Ovary (tissue), 10 donors: ENCODE measurements at regions of chr2 and their contacts with region 1.

Region 1: GRCh38 chr2:88489200-88489599 is 36.7 kb upstream of the FOXI3 start:
- DNase-seq: no peak
- H3K4me3 ChIP-seq: no peak overlapping the region
- H3K27ac ChIP-seq: no peak overlapping the region
- H3K4me1 ChIP-seq: no peaks in the 10 kb centered on the region
- H3K27me3 ChIP-seq: no peaks in the 10 kb centered on the region
- CTCF ChIP-seq: no peak
- EP300 ChIP-seq: no peak
- POLR2A ChIP-seq: no peak

Region 2: GRCh38 chr2:88400037-88400767 is 89.0 kb before region 1 on chr2:
- intact Hi-C with region 1: no loop called
- DNase-seq: no peak
- H3K4me3 ChIP-seq: no peak overlapping the region
- H3K27ac ChIP-seq: no peak overlapping the region
- H3K4me1 ChIP-seq: no peaks in the 10 kb centered on the region
- H3K27me3 ChIP-seq: no peaks in the 10 kb centered on the region
- CTCF ChIP-seq: no peak
- EP300 ChIP-seq: no peak
- POLR2A ChIP-seq: no peak

Region 3: DNA sequence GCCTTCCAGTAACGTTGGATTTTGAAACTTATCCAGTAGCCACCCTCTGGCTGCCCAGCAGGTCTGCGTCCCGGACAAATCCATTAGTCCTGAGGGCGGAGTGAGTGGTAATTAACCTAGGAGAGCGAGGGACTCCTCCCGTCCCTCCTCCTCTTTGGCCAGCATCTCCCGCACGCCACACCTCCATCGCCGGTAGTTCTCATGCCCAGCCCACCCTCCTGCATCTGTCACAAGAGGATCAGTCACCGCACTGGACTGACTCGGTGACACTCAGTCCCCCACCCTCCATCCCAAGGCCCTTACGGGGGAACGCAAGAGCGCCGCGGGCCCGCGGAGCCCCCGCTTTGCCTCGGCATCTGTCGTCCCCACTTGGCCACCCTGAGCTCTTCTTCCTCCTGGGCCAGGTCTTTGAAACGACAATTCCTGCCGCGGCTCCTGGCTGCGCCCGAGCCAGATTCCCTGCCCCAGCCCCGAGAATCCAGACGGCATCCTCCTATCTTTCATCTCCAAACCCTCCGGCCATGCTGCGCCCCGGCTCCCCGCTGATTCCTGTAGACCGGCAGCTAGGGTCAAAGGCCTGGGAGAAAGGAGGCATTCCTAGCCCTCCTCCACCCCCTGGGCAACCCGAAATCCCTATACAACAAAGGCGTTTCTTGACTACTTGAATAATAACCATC is 60.6 kb after region 1 on chr2:
- intact Hi-C with region 1: loop called in 1 of 4 experiments (anchors 2 kb)
- DNase-seq: no peak
- H3K4me3 ChIP-seq: no peak overlapping the region
- H3K27ac ChIP-seq: no peak overlapping the region
- H3K4me1 ChIP-seq: peaks cover 2% of the 10 kb centered on the region
- H3K27me3 ChIP-seq: no peaks in the 10 kb centered on the region
- CTCF ChIP-seq: no peak
- EP300 ChIP-seq: no peak
- POLR2A ChIP-seq: no peak

Region 4: GRCh38 chr2:88770016-88770415 is 280.8 kb after region 1 on chr2:
- intact Hi-C with region 1: no loop called
- DNase-seq: no peak
- H3K4me3 ChIP-seq: no peak overlapping the region
- H3K27ac ChIP-seq: no peak overlapping the region
- H3K4me1 ChIP-seq: peaks cover 1% of the 10 kb centered on the region
- H3K27me3 ChIP-seq: no peaks in the 10 kb centered on the region
- CTCF ChIP-seq: no peak
- EP300 ChIP-seq: no peak
- POLR2A ChIP-seq: no peak